MCF 10A (cell line): ENCODE measurements at regions of chr1 and their contacts with region 1.

Region 1: DNA sequence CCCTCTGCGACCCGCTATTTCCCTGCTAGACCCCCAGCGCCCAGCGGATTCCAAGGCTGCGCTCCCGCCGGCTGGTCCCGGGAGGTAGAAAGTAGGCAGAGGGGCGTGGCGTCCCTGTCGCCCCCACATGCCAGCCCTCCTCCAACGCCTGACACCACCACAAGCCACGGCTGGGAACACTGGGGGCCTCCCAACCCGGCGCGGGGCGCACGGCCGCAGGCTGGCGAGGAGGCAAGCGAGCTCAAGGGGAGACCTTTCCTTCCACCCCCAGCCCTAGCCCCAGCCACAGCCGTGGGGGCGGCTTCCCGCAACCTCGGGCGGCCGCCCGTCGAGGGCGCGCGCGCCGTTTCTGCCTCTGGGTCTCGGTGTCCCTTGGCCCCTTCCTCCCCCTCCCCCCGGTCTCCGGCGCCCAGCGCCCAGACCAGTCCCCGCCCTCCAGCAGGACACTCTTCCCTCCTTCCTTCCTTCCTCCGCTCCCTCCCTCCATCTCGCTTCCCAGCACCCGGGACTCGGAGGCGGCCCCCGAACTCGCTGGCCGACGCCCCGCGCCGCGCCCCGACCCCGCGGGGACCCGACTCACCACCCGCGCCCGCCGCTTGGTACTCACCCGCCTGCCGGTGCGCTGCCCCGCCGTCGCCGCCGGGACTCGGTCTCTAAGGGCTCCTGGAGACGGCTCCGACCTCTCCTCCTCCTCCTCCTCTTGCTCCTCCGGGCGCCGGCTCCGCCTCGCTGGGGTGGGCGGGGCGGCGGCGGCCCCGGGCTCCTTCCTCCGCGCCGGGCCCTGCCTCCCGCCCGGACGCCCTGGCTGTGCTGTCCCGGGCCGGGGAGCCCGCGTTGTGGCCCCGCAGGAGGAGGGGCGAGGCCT is at the start of gene GNG12:
- DNase-seq: peak; percentile 83
- H3K4me3 Mint-ChIP-seq: peak within 1 kb of the TSS; percentile 92
- H3K27ac Mint-ChIP-seq: peak within 1 kb of the TSS; percentile 99
- H3K4me1 Mint-ChIP-seq: peaks cover 28% of the 10 kb centered on the region
- H3K27me3 Mint-ChIP-seq: no peaks in the 10 kb centered on the region
- CTCF ChIP-seq: no peak
- total RNA-seq, gene GNG12: 117 and 135 TPM in 2 replicates

Region 2: DNA sequence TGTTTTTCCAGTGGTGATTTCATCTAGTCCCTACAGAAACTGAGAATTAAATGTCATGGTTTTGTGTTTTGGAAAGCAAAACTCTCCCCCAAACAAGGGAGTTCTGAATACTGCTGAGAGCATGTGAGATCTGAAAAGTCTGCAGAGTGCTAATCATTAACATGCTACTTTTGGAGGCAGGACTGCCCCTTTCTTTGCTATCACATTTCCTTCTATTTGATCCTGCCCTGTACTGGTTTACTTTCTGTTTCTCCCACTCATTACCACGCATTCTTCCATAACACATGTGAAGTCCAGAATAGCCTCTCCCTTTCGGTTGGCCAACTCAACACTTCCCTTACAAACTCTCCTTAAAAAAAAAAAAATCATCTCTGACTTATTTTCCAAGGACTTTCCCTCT is 84.3 kb before region 1 on chr1:
- CTCF ChIA-PET with region 1: interaction called, 3 read pairs
- POLR2A ChIA-PET with region 1: interaction called, 16 read pairs
- intact Hi-C with region 1: no loop called
- DNase-seq: peak; percentile 79
- H3K4me3 Mint-ChIP-seq: peak overlapping the region; percentile 65
- H3K27ac Mint-ChIP-seq: peak overlapping the region; percentile 89
- H3K4me1 Mint-ChIP-seq: peaks cover 58% of the 10 kb centered on the region
- H3K27me3 Mint-ChIP-seq: no peaks in the 10 kb centered on the region
- CTCF ChIP-seq: no peak

Region 3: DNA sequence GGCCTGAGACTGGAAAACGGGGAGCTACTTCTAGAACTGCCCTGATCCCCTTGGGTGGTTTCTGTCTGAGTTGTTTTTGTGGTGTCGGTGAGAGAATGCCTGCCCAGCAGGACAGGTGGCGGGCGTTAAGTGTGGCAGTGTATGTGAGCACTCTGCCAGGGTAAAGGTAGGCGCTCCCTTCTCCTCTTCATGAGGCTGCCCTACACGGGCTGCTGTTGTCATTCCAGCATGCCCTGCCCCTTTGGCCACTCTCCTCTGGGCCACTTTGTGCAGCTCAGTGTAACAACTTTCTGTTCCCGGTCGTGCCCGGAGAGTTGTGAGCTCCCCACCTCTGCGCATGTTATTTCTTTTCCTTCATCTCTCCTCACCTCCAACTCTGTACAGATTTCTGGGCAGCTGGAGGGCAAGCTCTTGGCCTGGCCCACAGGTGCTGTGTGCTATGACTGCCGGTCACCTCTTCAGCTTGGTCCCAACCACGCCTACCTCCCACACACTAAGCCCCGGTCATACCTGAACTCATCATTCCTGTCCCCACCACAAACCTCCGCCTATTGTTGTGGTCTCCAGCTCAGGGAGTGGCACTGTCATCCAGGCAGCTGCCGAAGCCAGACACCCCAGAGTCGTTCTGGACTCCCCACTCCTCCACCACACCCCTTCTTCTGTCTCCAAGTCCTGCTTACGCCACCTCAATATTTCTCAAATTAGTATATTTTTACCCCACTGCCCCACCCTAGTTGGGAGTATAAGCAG is 79.0 kb before region 1 on chr1:
- CTCF ChIA-PET with region 1: interaction called, 3 read pairs
- POLR2A ChIA-PET with region 1: interaction called, 16 read pairs
- intact Hi-C with region 1: no loop called
- DNase-seq: peak; percentile 69
- H3K4me3 Mint-ChIP-seq: peak overlapping the region; percentile 38
- H3K27ac Mint-ChIP-seq: peak overlapping the region; percentile 89
- H3K4me1 Mint-ChIP-seq: peaks cover 56% of the 10 kb centered on the region
- H3K27me3 Mint-ChIP-seq: no peaks in the 10 kb centered on the region
- CTCF ChIP-seq: no peak

Region 4: DNA sequence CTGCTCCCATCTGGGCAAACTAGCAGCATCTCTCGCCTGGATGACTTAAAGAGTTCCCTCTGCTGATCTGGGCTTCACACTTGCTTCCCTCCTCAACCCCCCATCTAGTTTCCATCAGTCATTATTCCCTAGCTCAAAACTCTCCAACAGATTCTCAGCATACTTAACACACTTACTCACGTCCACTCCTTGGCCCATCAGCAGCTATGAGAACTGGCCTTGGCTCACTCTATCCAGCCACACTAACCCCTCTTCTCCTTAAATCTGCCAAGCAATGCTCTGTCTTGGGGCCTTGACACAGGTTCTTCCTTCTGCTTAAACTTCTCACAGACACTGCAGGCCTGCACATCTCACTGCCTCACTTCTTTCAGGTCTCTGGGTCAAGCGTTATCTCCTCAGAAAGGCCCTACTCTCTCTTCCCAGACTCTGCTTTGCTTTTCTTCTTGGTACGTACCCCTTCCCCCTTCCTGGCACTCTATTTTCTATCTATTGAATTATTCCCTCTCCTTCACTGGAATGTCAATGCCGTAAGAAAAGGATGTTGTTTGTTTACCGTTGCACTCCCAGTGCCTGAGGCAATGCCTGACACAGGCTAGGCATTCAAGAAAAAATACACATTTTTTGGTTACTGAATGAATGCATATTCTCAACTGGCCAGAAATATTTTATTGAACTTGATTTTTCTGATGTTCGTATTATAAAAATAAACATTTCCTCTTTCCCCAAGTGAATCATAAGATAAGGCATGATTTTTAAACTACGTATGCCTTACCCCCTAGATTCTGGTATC is 41.1 kb before region 1 on chr1:
- CTCF ChIA-PET with region 1: interaction called, 3 read pairs
- POLR2A ChIA-PET with region 1: interaction called, 22 read pairs
- intact Hi-C with region 1: loop called (anchors 2 kb)
- DNase-seq: peak; percentile 72
- H3K4me3 Mint-ChIP-seq: peak overlapping the region; percentile 28
- H3K27ac Mint-ChIP-seq: peak overlapping the region; percentile 88
- H3K4me1 Mint-ChIP-seq: peaks cover 65% of the 10 kb centered on the region
- H3K27me3 Mint-ChIP-seq: no peaks in the 10 kb centered on the region
- CTCF ChIP-seq: no peak

Region 5: GRCh38 chr1:67814121-67814772 is 18.7 kb before region 1 on chr1:
- CTCF ChIA-PET with region 1: interaction called, 28 read pairs
- POLR2A ChIA-PET with region 1: interaction called, 262 read pairs
- intact Hi-C with region 1: no loop called
- DNase-seq: no peak
- H3K4me3 Mint-ChIP-seq: no peak overlapping the region
- H3K27ac Mint-ChIP-seq: peak overlapping the region; percentile 94
- H3K4me1 Mint-ChIP-seq: peaks cover 54% of the 10 kb centered on the region
- H3K27me3 Mint-ChIP-seq: no peaks in the 10 kb centered on the region
- CTCF ChIP-seq: no peak

Region 6: DNA sequence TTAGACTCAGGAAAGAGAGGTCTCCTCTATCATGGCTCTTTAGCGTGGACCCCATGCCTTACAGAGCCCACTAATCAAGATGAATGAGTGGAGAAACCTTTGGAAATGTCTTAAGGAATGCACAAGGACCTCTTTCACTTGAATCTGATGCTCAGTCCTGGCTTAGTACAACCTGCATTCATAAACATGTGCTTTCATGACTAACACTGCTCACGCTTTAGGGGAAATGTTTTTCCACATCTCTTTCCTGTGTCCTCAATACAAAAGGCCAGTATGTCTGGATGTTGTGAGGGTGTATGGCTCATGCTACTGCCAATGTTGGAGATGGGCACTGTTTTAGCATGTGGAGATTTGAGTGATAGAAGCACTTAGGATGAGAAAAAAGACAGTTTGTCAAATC is 14.5 kb after region 1 on chr1:
- CTCF ChIA-PET with region 1: interaction called, 37 read pairs
- POLR2A ChIA-PET with region 1: interaction called, 12 read pairs
- intact Hi-C with region 1: no loop called
- DNase-seq: no peak
- H3K4me3 Mint-ChIP-seq: no peak overlapping the region
- H3K27ac Mint-ChIP-seq: no peak overlapping the region
- H3K4me1 Mint-ChIP-seq: peaks cover 29% of the 10 kb centered on the region
- H3K27me3 Mint-ChIP-seq: no peaks in the 10 kb centered on the region
- CTCF ChIP-seq: no peak

Region 7: DNA sequence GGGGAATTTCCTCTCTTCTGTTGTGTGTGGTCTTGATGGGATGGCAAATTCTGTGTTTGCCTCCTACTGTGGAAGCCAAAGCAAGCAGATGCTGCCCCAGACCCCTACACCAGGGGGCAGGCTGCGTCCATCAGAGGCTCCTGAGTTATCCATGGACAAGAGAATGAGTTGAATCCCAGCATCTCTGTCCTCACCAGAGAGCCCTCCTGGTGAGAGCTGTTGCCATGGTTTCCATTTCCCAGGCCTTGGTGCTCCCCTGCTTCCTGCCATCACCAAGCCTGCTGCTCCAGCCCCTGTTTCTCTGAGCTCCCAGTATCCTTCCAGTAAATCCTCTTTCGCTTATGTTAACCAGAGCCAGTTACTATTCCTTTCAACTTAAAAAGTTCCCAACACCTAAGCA is 20.7 kb after region 1 on chr1:
- CTCF ChIA-PET with region 1: interaction called, 37 read pairs
- POLR2A ChIA-PET with region 1: interaction called, 6 read pairs
- intact Hi-C with region 1: no loop called
- DNase-seq: peak; percentile 71
- H3K4me3 Mint-ChIP-seq: no peak overlapping the region
- H3K27ac Mint-ChIP-seq: no peak overlapping the region
- H3K4me1 Mint-ChIP-seq: peaks cover 16% of the 10 kb centered on the region
- H3K27me3 Mint-ChIP-seq: no peaks in the 10 kb centered on the region
- CTCF ChIP-seq: peak; percentile 92